H1 (cell line): ENCODE measurements at regions of chr15 and their contacts with region 1.

Region 1: GRCh38 chr15:77118882-77119321 is 48.0 kb upstream of the TSPAN3 start:
- DNase-seq: no peak
- H3K4me3 ChIP-seq: no peak overlapping the region
- H3K27ac ChIP-seq: no peak overlapping the region
- H3K4me1 ChIP-seq: peaks cover 0 to 4% (median 0%) of the 10 kb centered on the region in 4 experiments; a peak in 4 of 7 replicates
- H3K27me3 ChIP-seq: no peaks in the 10 kb centered on the region
- CTCF ChIP-seq: peak in 2 of 3 experiments; percentile 60 to 66; a peak in 2 of 4 replicates
- EP300 ChIP-seq: no peak
- POLR2A ChIP-seq: no peak
- RAD21 ChIP-seq: peak; percentile 81 to 85

Region 2: DNA sequence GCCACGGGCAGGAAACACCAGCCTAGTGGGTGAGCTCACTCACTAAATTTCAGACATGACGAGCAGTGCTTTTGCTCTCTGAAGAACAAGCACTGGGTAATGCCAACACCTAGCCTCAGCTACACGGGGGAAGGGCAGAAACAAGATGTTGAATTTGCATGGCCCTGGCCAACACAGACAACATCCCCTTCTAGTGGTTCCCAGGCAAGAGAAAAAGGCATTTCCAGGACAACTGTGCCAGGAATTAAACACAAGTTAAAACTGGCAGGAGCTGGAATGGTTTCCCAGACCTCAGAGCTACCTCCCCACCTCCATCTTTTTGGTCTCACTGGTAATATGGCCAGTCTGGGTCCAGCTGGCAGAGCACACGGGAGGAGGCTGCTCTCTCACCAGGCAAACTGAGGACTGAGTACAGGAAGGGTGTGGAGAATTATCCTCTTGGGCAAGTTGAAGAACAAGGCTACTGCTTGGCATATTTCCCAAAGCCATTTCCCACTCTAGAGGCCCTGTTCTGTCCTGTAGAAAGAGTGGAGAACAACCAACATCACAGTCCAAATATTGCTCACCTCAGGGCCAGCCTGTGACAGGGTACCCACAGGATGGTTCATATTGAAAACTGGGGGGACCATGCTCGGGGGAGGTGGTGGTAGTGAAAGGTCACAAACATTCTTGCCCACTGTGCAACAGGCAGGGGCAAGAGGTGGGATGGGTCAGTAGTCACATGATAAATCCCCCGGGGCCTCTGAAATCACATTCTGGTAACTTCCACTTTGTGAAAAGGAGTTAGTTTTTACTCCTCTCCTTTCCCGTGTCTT is 74.5 kb before region 1 on chr15:
- CTCF ChIA-PET with region 1: no interaction called
- POLR2A ChIA-PET with region 1: no interaction called
- DNase-seq: no peak
- H3K4me3 ChIP-seq: no peak overlapping the region
- H3K27ac ChIP-seq: no peak overlapping the region
- H3K4me1 ChIP-seq: no peaks in the 10 kb centered on the region
- H3K27me3 ChIP-seq: no peaks in the 10 kb centered on the region
- CTCF ChIP-seq: no peak
- EP300 ChIP-seq: no peak
- POLR2A ChIP-seq: no peak
- RAD21 ChIP-seq: no peak

Region 3: DNA sequence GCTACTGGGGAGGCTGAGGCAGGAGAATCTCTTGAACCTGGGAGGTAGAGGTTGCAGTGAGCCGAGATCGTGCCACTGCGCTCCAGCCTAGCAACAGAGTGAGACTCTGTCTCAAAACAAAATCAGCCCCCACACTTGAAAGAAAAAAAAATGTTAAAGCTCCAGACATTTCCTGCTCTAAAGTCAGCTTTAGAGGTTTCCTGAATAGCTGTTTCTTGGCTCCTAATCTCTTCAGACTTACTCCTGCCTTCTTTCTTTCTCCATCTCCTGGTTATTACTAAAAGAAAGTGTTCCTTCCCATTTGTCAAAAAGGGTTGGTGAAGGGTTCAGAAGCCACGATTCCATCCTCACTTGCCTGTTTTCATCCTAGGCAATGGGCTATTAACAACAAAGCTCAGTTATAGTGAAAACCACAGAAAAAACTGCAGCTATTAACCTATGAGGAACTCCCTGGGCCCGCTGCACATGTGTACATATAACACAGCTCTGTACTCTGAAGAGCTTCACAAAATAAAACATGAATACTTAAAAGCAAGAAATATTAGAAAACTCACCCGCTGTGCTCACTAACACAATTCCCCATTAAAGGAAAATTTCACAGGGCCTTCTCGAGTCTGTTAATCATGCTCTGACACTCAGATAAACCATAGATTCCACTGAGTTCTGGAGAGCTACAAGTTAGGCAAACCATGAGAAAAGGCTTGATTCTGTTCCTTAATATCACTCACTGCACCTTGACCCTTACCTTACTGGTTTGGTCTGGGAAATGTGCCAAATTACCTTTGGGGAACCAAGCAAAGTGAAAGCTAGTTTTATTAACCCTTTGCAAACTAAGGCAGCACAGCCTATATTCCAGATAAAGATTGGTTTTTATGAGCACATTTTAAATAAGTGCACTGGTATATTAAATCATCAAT is 41.9 kb after region 1 on chr15:
- CTCF ChIA-PET with region 1: interaction called, 18 read pairs
- POLR2A ChIA-PET with region 1: no interaction called
- DNase-seq: no peak
- H3K4me3 ChIP-seq: no peak overlapping the region
- H3K27ac ChIP-seq: no peak overlapping the region
- H3K4me1 ChIP-seq: peaks cover 0 to 10% (median 0%) of the 10 kb centered on the region in 4 experiments; a peak in 3 of 7 replicates
- H3K27me3 ChIP-seq: no peaks in the 10 kb centered on the region
- CTCF ChIP-seq: no peak
- EP300 ChIP-seq: no peak
- POLR2A ChIP-seq: no peak
- RAD21 ChIP-seq: no peak

Region 4: GRCh38 chr15:77486542-77487468 is 367.9 kb after region 1 on chr15:
- CTCF ChIA-PET with region 1: interaction called, 10 read pairs
- POLR2A ChIA-PET with region 1: no interaction called
- DNase-seq: no peak
- H3K4me3 ChIP-seq: no peak overlapping the region
- H3K27ac ChIP-seq: no peak overlapping the region
- H3K4me1 ChIP-seq: peaks cover 3 to 20% (median 18%) of the 10 kb centered on the region in 4 experiments
- H3K27me3 ChIP-seq: no peaks in the 10 kb centered on the region
- CTCF ChIP-seq: no peak
- EP300 ChIP-seq: no peak
- POLR2A ChIP-seq: no peak
- RAD21 ChIP-seq: no peak